Vagina (tissue), 2 donors: ENCODE measurements at regions of chr2 and their contacts with region 1.

Region 1: DNA sequence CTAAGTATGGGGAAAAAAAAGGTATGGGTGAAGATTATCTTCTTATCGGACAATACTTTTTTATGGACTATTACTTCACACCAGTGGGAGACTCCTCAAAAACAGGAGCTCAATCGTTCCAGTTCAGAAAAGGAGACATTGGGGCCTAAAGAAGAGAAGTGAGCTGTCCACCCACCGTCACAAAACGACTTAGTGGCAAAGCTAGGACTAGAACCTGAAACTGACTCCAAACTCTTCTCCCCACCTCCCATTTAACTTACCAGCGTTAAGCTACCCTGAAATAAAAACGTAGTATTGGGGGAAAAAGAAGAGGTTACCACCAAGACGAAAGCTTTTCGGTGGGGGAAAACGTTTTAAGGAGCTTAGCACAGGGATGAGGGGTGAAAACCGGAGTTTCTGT is 503 bp downstream of the GTF3C3 start:
- DNase-seq: no peak
- H3K4me3 ChIP-seq: peak overlapping the region; percentile 78
- H3K27ac ChIP-seq: peak overlapping the region; percentile 84
- H3K4me1 ChIP-seq: peaks cover 19% of the 10 kb centered on the region
- H3K27me3 ChIP-seq: no peaks in the 10 kb centered on the region
- CTCF ChIP-seq: no peak
- POLR2A ChIP-seq: no peak

Region 2: GRCh38 chr2:197777823-197778407 is 978.9 kb after region 1 on chr2:
- intact Hi-C with region 1: loop called (anchors 10 kb)
- DNase-seq: no peak
- H3K4me3 ChIP-seq: no peak overlapping the region
- H3K27ac ChIP-seq: no peak overlapping the region
- H3K4me1 ChIP-seq: no peaks in the 10 kb centered on the region
- H3K27me3 ChIP-seq: no peaks in the 10 kb centered on the region
- CTCF ChIP-seq: peak; percentile 64 to 70 (median 67)
- POLR2A ChIP-seq: no peak